ENCODE measurements at regions of chr9 and their contacts with region 1.

Region 1: GRCh38 chr9:20490246-20490834 is 132.0 kb downstream of the MLLT3 start:
- DNase-seq: no peak
- ATAC-seq: no peak
- H3K4me3 ChIP-seq: no peak overlapping the region
- H3K4me3 Mint-ChIP-seq: no peak overlapping the region
- H3K27ac ChIP-seq: no peak overlapping the region
- H3K27ac Mint-ChIP-seq: peak overlapping the region; percentile 29
- H3K4me1 ChIP-seq: peaks cover 17% of the 10 kb centered on the region
- H3K4me1 Mint-ChIP-seq: peaks cover 68% of the 10 kb centered on the region
- H3K27me3 ChIP-seq: no peaks in the 10 kb centered on the region
- H3K27me3 Mint-ChIP-seq: no peaks in the 10 kb centered on the region
- CTCF ChIP-seq: no peak

Region 2: DNA sequence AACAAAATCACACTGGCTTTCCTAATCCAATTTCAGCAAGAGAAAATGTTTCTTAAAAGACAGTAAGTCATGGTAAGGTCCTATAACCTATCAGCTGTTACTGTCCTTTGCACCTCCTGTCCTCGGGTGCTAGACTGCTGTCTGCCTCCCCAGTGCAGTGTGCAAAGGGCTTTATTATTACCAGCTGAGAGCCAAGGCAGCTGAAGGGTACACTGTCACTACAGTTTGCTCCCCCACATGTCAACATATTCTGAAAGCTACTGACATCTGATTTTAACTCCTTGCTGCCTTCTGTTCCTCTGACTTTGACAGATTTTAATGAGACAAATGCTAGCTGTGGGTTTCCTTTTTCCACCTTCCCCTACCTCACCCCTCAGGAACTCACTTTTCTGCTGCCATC is 312.1 kb before region 1 on chr9:
- CTCF ChIA-PET with region 1: no interaction called
- POLR2A ChIA-PET with region 1: no interaction called
- intact Hi-C with region 1: no loop called
- DNase-seq: no peak
- ATAC-seq: no peak
- H3K4me3 ChIP-seq: no peak overlapping the region
- H3K4me3 Mint-ChIP-seq: no peak overlapping the region
- H3K27ac ChIP-seq: no peak overlapping the region
- H3K27ac Mint-ChIP-seq: no peak overlapping the region
- H3K4me1 ChIP-seq: no peaks in the 10 kb centered on the region
- H3K4me1 Mint-ChIP-seq: no peaks in the 10 kb centered on the region
- H3K27me3 ChIP-seq: no peaks in the 10 kb centered on the region
- H3K27me3 Mint-ChIP-seq: no peaks in the 10 kb centered on the region
- CTCF ChIP-seq: no peak

Region 3: DNA sequence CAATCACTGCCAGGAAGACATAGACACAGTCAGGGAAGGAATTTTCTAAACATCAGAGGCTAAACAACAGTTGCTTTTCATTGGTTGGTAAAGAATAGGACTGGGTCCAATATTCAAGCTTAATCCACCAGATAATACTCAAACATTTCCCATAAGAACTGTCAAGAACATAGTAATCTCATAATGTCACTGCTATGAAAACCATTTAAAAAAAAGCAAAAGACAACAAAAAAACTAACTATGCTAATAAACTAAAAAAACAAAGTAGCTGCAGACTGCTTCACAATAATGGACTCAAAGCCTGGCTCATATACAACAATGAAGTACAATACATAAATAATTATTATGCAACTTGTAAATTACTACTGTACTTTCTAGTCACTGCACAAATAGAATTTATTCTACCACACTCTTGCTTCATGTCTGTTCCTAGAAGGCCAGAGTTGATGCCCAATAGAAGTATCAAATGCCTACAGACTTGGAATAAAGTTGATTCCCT is 16.8 kb before region 1 on chr9:
- CTCF ChIA-PET with region 1: no interaction called
- POLR2A ChIA-PET with region 1: no interaction called
- intact Hi-C with region 1: loop called in 1 of 2 experiments (anchors 2 kb)
- DNase-seq: no peak
- ATAC-seq: no peak
- H3K4me3 ChIP-seq: no peak overlapping the region
- H3K4me3 Mint-ChIP-seq: no peak overlapping the region
- H3K27ac ChIP-seq: no peak overlapping the region
- H3K27ac Mint-ChIP-seq: no peak overlapping the region
- H3K4me1 ChIP-seq: no peaks in the 10 kb centered on the region
- H3K4me1 Mint-ChIP-seq: peaks cover 67% of the 10 kb centered on the region
- H3K27me3 ChIP-seq: no peaks in the 10 kb centered on the region
- H3K27me3 Mint-ChIP-seq: no peaks in the 10 kb centered on the region
- CTCF ChIP-seq: no peak

Region 4: GRCh38 chr9:20508242-20508641 is 17.9 kb after region 1 on chr9:
- CTCF ChIA-PET with region 1: no interaction called
- POLR2A ChIA-PET with region 1: no interaction called
- intact Hi-C with region 1: loop called in 1 of 2 experiments (anchors 2 kb)
- DNase-seq: peak in 1 of 9 experiments; percentile 14
- ATAC-seq: peak; percentile 15
- H3K4me3 ChIP-seq: no peak overlapping the region
- H3K4me3 Mint-ChIP-seq: peak overlapping the region; percentile 17
- H3K27ac ChIP-seq: no peak overlapping the region
- H3K27ac Mint-ChIP-seq: peak overlapping the region; percentile 63
- H3K4me1 ChIP-seq: peaks cover 44% of the 10 kb centered on the region
- H3K4me1 Mint-ChIP-seq: peaks cover 80% of the 10 kb centered on the region
- H3K27me3 ChIP-seq: no peaks in the 10 kb centered on the region
- H3K27me3 Mint-ChIP-seq: no peaks in the 10 kb centered on the region
- CTCF ChIP-seq: no peak

Measured in CD8-positive, alpha-beta T cell (primary cell).